ENCODE measurements at regions of chr19 and their contacts with region 1.

Region 1: GRCh38 chr19:53365134-53365898 is at the start of gene ZNF525:
- DNase-seq: peak; percentile 95 to 99 (median 97)
- ATAC-seq: peak; percentile 100
- H3K4me3 ChIP-seq: peak within 1 kb of the TSS; percentile 85 to 99
- H3K4me3 Mint-ChIP-seq: peak within 1 kb of the TSS; percentile 96
- H3K27ac ChIP-seq: peak within 1 kb of the TSS; percentile 86 to 91
- H3K27ac Mint-ChIP-seq: peak within 1 kb of the TSS; percentile 99
- H3K4me1 ChIP-seq: peaks cover 9% of the 10 kb centered on the region
- H3K4me1 Mint-ChIP-seq: peaks cover 29% of the 10 kb centered on the region
- H3K27me3 ChIP-seq: no peaks in the 10 kb centered on the region
- H3K27me3 Mint-ChIP-seq: no peaks in the 10 kb centered on the region
- CTCF ChIP-seq: peak; percentile 54
- total RNA-seq, gene ZNF525: 25.6 to 26.4 TPM

Region 2: DNA sequence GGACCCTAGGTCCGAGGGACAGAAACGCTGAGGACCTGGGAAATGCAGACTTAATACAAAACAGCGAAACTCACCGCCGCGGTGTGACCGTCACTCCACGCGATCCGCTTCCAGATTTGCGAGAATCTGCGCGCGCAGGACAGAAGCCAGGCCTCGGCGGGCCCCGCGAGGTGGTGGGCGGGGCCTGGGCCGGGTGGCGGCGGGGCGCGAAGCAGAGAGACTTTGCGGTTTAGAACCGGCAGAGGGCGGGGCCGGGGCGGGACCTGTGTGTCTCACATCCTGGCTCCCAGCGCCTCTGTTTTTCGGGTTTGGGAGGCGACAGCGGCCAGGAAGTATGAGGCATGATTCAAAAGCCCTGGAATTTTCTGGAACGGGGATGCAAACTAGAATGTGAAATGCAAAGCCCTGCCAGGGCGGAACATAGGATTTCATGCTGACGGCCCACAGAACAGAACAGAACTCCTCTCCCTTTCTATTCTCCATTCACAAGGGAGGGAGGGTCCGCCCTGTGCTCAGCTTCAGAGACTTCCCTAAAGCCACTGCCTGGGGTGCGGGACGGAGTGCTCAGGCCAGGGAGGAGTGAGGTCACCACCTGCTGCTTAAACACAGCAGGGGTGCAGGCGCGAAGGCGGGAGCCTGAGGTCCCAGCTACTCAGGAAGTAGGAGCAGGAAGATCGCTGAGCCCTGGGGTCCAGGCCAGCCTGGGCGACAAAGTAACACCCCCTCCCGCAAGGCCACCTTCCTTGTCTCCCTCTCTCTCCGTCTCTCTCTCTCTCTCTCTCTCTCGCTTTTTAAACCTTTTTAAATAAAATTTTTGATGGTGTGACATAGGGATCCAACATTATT is 674.7 kb before region 1 on chr19:
- CTCF ChIA-PET with region 1: no interaction called
- POLR2A ChIA-PET with region 1: no interaction called
- intact Hi-C with region 1: loop called in 1 of 2 experiments (anchors 2 kb)
- DNase-seq: peak; percentile 75 to 94 (median 93)
- ATAC-seq: peak; percentile 97
- H3K4me3 ChIP-seq: peak overlapping the region; percentile 84 to 94
- H3K4me3 Mint-ChIP-seq: peak overlapping the region; percentile 92
- H3K27ac ChIP-seq: peak overlapping the region; percentile 58 to 87
- H3K27ac Mint-ChIP-seq: peak overlapping the region; percentile 95
- H3K4me1 ChIP-seq: peaks cover 16% of the 10 kb centered on the region
- H3K4me1 Mint-ChIP-seq: peaks cover 31% of the 10 kb centered on the region
- H3K27me3 ChIP-seq: no peaks in the 10 kb centered on the region
- H3K27me3 Mint-ChIP-seq: no peaks in the 10 kb centered on the region
- CTCF ChIP-seq: no peak

Region 3: DNA sequence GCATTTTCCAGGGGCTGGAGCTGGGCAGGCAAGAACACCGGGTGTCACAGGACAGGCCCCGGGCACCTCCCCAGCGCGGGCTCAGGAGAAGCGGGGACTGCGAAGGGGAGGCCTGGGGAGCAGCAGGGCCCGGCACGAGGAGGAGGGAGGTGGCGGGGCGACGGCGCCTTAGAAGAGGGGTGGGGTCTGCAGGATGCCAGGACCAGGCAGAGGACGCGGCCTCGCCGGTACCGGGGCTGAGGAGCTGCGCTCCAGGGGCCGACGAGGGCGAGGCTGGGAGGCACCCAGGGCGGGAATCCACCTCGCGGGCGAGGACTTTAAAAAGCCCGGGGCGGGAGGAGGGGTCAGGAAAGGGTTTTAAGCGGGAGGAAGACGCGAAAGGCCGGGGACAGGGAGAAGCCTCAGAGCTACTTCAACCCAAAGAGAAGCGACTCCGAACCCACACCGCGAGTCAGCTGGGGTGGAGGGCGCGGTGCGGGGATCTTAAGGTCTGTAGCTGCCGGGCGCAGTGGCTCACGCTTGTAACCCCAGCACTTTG is 207.1 kb before region 1 on chr19:
- CTCF ChIA-PET with region 1: no interaction called
- POLR2A ChIA-PET with region 1: no interaction called
- intact Hi-C with region 1: loop called in 1 of 2 experiments (anchors 1 kb)
- DNase-seq: peak in 7 of 9 experiments; percentile 4 to 63 (median 47)
- ATAC-seq: peak; percentile 42
- H3K4me3 ChIP-seq: peak overlapping the region; percentile 59 to 60
- H3K4me3 Mint-ChIP-seq: peak overlapping the region; percentile 77
- H3K27ac ChIP-seq: peak overlapping the region; percentile 44 to 52
- H3K27ac Mint-ChIP-seq: peak overlapping the region; percentile 79
- H3K4me1 ChIP-seq: peaks cover 13% of the 10 kb centered on the region
- H3K4me1 Mint-ChIP-seq: peaks cover 23% of the 10 kb centered on the region
- H3K27me3 ChIP-seq: no peaks in the 10 kb centered on the region
- H3K27me3 Mint-ChIP-seq: no peaks in the 10 kb centered on the region
- CTCF ChIP-seq: no peak

Region 4: DNA sequence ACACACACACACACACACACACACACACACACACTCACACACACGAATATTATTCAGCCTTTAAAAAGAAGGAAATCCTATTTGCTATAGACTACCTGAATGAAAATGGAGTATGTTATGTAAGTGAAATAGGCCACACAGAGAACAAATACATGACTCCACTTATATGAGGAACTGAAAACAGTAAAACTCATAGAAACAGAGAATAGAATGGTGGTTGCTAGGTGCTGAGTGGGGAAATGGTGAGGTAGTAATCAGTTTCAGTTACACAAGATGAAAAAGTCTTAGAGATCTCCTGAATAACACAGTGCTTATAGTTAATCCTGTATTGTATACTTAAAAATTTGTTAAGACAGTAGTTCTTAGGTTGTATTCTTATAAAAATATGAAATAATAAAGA is 118.8 kb before region 1 on chr19:
- CTCF ChIA-PET with region 1: no interaction called
- POLR2A ChIA-PET with region 1: no interaction called
- intact Hi-C with region 1: no loop called
- DNase-seq: no peak
- ATAC-seq: no peak
- H3K4me3 ChIP-seq: no peak overlapping the region
- H3K4me3 Mint-ChIP-seq: no peak overlapping the region
- H3K27ac ChIP-seq: no peak overlapping the region
- H3K27ac Mint-ChIP-seq: no peak overlapping the region
- H3K4me1 ChIP-seq: no peaks in the 10 kb centered on the region
- H3K4me1 Mint-ChIP-seq: no peaks in the 10 kb centered on the region
- H3K27me3 ChIP-seq: no peaks in the 10 kb centered on the region
- H3K27me3 Mint-ChIP-seq: no peaks in the 10 kb centered on the region
- CTCF ChIP-seq: no peak

Region 5: DNA sequence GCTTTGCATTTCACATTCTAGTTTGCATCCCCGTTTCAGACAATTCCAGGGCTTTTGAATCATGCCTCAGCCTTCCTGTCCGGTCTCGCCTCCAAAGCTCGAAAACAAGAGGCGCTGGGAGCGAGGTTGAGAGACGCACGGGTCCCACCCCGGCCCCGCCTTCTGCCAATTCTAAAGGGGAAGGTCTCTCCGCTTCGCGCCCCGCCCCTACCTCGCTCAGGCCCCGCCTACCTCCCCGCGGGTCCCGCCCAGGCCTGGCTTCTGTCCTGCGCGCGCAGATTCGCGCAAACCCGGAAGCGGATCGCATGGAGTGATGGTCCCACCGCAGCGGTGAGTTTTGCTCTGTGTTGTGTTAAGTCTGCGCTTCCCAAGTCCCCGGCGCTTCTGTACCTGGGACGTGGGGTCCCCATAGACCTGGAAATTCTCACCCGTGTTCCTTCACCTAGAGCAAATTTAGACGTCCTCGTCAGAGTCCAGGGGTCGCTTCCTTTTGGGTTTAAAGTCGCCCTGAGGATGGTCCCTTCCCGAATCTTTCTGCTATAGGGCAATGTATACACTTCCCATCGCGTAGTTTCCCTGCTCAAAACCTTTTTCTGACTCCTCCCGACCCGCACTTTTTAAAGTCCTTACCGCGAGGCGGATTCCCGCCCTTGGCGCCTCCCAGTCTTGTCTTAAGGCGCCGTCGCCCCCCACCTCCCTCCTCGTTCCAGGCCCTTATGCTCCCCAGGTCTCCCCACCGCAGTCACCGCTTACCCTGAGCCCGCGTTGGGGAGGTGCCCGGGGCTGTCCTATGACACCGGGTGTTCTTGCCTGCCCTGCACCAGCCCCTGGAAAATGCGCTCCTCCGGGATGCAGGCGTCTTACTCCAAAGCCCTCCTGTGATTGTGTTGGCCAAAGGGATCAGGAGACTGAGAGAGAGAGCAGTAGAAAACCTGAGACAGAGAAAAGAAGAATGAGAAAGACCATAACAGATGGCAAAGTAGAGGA is 31.6 kb before region 1 on chr19 and contains the start of gene ZNF845:
- CTCF ChIA-PET with region 1: no interaction called
- POLR2A ChIA-PET with region 1: interaction called, 5 read pairs
- intact Hi-C with region 1: loop called (anchors 1 kb)
- DNase-seq: peak; percentile 93 to 98 (median 96)
- ATAC-seq: peak; percentile 98
- H3K4me3 ChIP-seq: peak within 1 kb of the TSS; percentile 81 to 98
- H3K4me3 Mint-ChIP-seq: peak within 1 kb of the TSS; percentile 92
- H3K27ac ChIP-seq: peak within 1 kb of the TSS; percentile 66 to 83
- H3K27ac Mint-ChIP-seq: peak within 1 kb of the TSS; percentile 81
- H3K4me1 ChIP-seq: no peaks in the 10 kb centered on the region
- H3K4me1 Mint-ChIP-seq: peaks cover 31% of the 10 kb centered on the region
- H3K27me3 ChIP-seq: peaks cover 0 to 4% of the 10 kb centered on the region in 2 experiments
- H3K27me3 Mint-ChIP-seq: peaks cover 3% of the 10 kb centered on the region
- CTCF ChIP-seq: no peak
- total RNA-seq, gene ZNF845: 10.9 to 11.7 TPM

Region 6: DNA sequence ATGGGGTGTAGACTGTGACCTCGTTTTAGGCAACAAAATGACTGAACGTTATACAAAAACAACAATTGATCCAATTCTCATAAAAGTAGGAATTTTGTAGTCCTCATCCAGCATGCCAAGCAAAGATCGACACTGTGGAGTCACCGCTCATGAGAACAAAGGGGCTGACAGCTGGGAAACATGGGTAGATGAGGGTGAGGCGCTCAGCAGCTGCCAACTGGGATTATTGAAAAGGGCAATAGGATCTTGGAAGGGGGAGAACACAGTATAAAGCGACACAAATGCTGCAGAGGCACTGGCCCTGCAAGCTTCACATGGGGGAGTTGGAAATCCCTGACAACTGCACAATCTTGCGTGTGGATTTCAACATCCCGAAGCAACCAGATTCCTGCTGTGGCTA is 24.3 kb after region 1 on chr19:
- CTCF ChIA-PET with region 1: no interaction called
- POLR2A ChIA-PET with region 1: no interaction called
- intact Hi-C with region 1: no loop called
- DNase-seq: no peak
- ATAC-seq: no peak
- H3K4me3 ChIP-seq: no peak overlapping the region
- H3K4me3 Mint-ChIP-seq: no peak overlapping the region
- H3K27ac ChIP-seq: no peak overlapping the region
- H3K27ac Mint-ChIP-seq: no peak overlapping the region
- H3K4me1 ChIP-seq: peaks cover 3% of the 10 kb centered on the region
- H3K4me1 Mint-ChIP-seq: peaks cover 3% of the 10 kb centered on the region
- H3K27me3 ChIP-seq: no peaks in the 10 kb centered on the region
- H3K27me3 Mint-ChIP-seq: no peaks in the 10 kb centered on the region
- CTCF ChIP-seq: no peak

Region 7: GRCh38 chr19:53431399-53432087 is 66.2 kb after region 1 on chr19 and contains the start of gene ZNF761:
- CTCF ChIA-PET with region 1: no interaction called
- POLR2A ChIA-PET with region 1: interaction called, 5 read pairs
- intact Hi-C with region 1: loop called (anchors 1 kb)
- DNase-seq: peak; percentile 95 to 100 (median 97)
- ATAC-seq: peak; percentile 99
- H3K4me3 ChIP-seq: peak within 1 kb of the TSS; percentile 71 to 85
- H3K4me3 Mint-ChIP-seq: peak within 1 kb of the TSS; percentile 98
- H3K27ac ChIP-seq: peak within 1 kb of the TSS; percentile 79 to 84
- H3K27ac Mint-ChIP-seq: peak within 1 kb of the TSS; percentile 97
- H3K4me1 ChIP-seq: peaks cover 11% of the 10 kb centered on the region
- H3K4me1 Mint-ChIP-seq: peaks cover 41% of the 10 kb centered on the region
- H3K27me3 ChIP-seq: no peaks in the 10 kb centered on the region
- H3K27me3 Mint-ChIP-seq: no peaks in the 10 kb centered on the region
- CTCF ChIP-seq: peak; percentile 47
- total RNA-seq, gene ZNF761: 8.4 to 9.2 TPM

Measured in CD8-positive, alpha-beta T cell (primary cell).